Naive thymus-derived CD4-positive, alpha-beta T cell (primary cell): ENCODE measurements at regions of chr19 and their contacts with region 1.

Region 1: GRCh38 chr19:37077934-37078725 is at the start of gene ZNF420:
- DNase-seq: peak; percentile 64 to 89 (median 84)
- ATAC-seq: peak; percentile 98
- H3K4me3 ChIP-seq: peak within 1 kb of the TSS; percentile 92
- H3K4me3 Mint-ChIP-seq: peak within 1 kb of the TSS; percentile 90 to 100 (median 96)
- H3K27ac ChIP-seq: peak within 1 kb of the TSS; percentile 82
- H3K27ac Mint-ChIP-seq: peak within 1 kb of the TSS; percentile 70 to 99 (median 94)
- H3K4me1 ChIP-seq: peaks cover 11 to 19% of the 10 kb centered on the region in 2 donors
- H3K4me1 Mint-ChIP-seq: peaks cover 16 to 43% (median 34%) of the 10 kb centered on the region in 7 donors
- H3K27me3 ChIP-seq: no peaks in the 10 kb centered on the region
- H3K27me3 Mint-ChIP-seq: no peaks in the 10 kb centered on the region
- total RNA-seq, gene ZNF420: 10.8 to 34.9 (median 15.9) TPM

Region 2: GRCh38 chr19:36378625-36379509 is 699.3 kb before region 1 on chr19 and contains the start of gene ZFP14:
- CTCF ChIA-PET with region 1: no interaction called
- POLR2A ChIA-PET with region 1: no interaction called
- intact Hi-C with region 1: loop called (anchors 1 kb)
- DNase-seq: peak; percentile 86 to 95 (median 93)
- ATAC-seq: peak; percentile 99
- H3K4me3 ChIP-seq: peak within 1 kb of the TSS; percentile 86
- H3K4me3 Mint-ChIP-seq: peak within 1 kb of the TSS; percentile 82 to 98 (median 94)
- H3K27ac ChIP-seq: peak within 1 kb of the TSS; percentile 86
- H3K27ac Mint-ChIP-seq: peak within 1 kb of the TSS; percentile 55 to 98 (median 94)
- H3K4me1 ChIP-seq: peaks cover 0 to 10% of the 10 kb centered on the region in 2 donors
- H3K4me1 Mint-ChIP-seq: peaks cover 9 to 23% (median 21%) of the 10 kb centered on the region in 7 donors
- H3K27me3 ChIP-seq: no peaks in the 10 kb centered on the region
- H3K27me3 Mint-ChIP-seq: no peaks in the 10 kb centered on the region
- total RNA-seq, gene ZFP14: 5.3 to 24.0 (median 9.2) TPM

Region 3: DNA sequence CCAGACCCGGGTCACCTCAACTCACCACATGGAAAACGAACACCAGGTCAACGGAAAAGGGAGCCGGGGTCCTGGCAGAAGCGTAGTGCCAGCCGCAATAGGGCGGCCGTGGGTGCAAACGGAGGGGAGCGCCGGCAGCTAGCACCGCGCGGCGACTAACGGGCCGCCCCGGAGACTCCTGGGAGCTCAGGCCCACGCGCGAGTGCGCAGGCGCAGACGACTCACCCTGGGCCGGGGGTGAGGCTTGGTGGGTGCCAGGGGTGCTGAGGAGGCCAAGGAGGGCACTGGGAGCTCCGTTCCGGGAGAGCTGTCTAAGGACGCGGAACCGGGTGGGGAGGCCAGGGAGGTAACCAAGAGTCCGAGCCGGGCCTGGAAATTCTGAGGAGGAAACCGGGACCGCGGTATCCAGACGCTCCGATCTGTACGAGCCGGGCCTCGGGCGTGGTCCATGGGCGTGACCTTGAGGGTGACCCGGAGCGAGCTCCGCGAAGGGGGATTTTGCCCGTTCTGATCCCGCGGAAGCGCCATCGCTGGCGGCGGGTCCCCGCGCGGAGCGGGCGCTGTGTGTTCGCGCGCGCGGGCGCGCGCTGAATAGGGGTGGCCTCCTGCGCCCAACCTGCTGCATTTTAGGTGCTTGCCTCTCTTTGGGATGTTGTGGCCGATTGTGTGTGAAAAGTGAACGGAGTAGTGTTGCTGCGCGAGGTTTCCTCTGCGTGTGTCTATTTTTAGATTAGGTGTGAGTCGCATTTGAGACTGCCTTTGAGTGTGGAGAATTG is 472.8 kb before region 1 on chr19 and contains the start of gene ZNF382:
- CTCF ChIA-PET with region 1: no interaction called
- POLR2A ChIA-PET with region 1: no interaction called
- intact Hi-C with region 1: loop called in 1 of 2 experiments (anchors 1 kb)
- DNase-seq: peak; percentile 77 to 92 (median 86)
- ATAC-seq: peak; percentile 80
- H3K4me3 ChIP-seq: peak within 1 kb of the TSS; percentile 95
- H3K4me3 Mint-ChIP-seq: peak within 1 kb of the TSS; percentile 81 to 99 (median 93)
- H3K27ac ChIP-seq: peak within 1 kb of the TSS; percentile 84
- H3K27ac Mint-ChIP-seq: peak within 1 kb of the TSS; percentile 78 to 98 (median 93)
- H3K4me1 ChIP-seq: peaks cover 7 to 15% of the 10 kb centered on the region in 2 donors
- H3K4me1 Mint-ChIP-seq: peaks cover 20 to 32% (median 27%) of the 10 kb centered on the region in 7 donors
- H3K27me3 ChIP-seq: no peaks in the 10 kb centered on the region
- H3K27me3 Mint-ChIP-seq: no peaks in the 10 kb centered on the region
- total RNA-seq, gene ZNF382: 5.4 to 20.2 (median 12.2) TPM

Region 4: DNA sequence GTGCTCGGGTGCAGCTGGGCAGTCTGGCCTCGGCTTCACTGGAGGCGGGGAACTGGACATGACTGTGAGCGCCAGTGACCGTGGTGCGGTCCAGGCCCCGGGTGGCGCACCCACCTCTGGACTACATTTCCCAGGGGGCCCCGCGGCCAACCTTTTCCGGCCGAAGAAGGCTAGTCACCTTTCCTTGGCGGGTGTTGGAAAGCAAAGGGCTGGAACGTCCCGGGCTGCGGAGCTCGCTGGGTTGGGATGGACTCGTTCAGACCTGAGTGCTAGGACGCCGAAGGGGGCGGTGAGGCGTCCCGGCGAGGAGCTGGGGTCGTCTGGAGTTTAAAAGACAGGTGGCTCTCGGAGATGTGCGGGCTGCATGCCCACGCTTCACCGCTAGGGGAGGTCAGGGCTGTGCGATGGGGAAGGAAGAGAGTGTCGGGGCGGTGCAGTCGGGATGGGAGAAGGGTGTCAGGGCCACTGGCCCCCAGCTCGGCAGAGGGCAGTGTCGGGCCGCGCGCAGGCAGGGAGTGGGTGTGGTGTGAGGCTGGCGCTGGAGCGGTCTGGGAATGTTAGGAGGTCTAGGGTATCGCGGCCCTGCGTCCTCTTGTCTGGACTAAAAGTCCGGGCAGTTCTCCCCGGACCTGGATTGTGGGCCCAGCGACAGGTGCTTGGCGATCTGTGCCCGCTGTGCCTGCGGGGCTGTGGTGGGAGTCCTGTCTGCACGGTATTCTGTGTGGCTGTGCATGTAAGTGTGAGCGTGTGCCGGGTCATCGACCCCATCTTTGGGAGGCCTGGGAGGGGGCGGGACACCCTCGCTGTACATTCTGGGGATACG is 104.9 kb before region 1 on chr19:
- CTCF ChIA-PET with region 1: no interaction called
- POLR2A ChIA-PET with region 1: interaction called, 3 read pairs
- intact Hi-C with region 1: loop called (anchors 1 kb)
- DNase-seq: peak; percentile 56 to 84 (median 73)
- ATAC-seq: peak; percentile 96
- H3K4me3 ChIP-seq: peak overlapping the region; percentile 100
- H3K4me3 Mint-ChIP-seq: peak overlapping the region; percentile 92 to 99 (median 97)
- H3K27ac ChIP-seq: peak overlapping the region; percentile 75
- H3K27ac Mint-ChIP-seq: peak overlapping the region; percentile 83 to 97 (median 92)
- H3K4me1 ChIP-seq: peaks cover 5 to 15% of the 10 kb centered on the region in 2 donors
- H3K4me1 Mint-ChIP-seq: peaks cover 9 to 22% (median 13%) of the 10 kb centered on the region in 7 donors
- H3K27me3 ChIP-seq: no peaks in the 10 kb centered on the region
- H3K27me3 Mint-ChIP-seq: no peaks in the 10 kb centered on the region

Region 5: DNA sequence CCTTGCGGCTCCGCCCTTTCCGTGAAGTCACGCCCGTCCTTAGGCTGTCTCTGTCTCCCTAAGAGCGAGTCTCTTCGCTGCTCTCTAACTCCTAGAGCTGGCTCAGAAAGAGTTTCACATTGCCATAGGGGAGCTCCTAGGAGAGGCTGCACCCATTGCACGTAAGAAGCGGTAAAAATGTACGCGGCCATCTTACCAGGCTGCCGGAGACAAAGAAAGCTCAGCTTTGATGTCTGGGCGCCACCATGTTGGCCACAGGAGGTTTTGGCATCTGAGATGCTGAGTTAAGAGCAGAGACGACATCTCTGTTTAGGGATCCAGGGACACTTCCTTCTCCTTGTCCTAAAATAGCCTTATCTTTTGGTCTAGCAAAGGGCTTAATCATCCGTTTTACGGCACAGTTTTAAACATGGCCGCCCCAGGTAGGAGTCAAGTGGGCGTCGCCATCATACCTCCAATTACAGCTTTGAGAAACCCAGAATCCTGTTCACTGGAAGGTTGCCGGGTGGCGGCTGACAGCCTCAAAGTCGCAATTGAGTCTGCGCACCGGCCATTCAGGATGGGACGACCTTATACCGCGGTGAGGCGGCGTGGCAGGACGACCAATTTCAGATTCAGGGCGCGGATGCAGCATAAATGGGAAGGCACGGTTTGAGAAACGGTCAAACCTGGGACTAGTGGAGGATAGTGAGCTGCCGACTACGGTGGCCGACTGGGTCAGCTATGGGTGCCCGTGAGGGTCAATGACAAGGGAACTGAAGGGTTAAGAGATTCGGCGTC is 428.4 kb after region 1 on chr19 and contains the start of gene ZNF793:
- CTCF ChIA-PET with region 1: no interaction called
- POLR2A ChIA-PET with region 1: interaction called, 4 read pairs
- intact Hi-C with region 1: loop called in 1 of 2 experiments (anchors 2 kb)
- DNase-seq: peak; percentile 33 to 88 (median 83)
- ATAC-seq: peak; percentile 90
- H3K4me3 ChIP-seq: peak within 1 kb of the TSS; percentile 83
- H3K4me3 Mint-ChIP-seq: no peak within 1 kb of the TSS
- H3K27ac ChIP-seq: peak within 1 kb of the TSS; percentile 90
- H3K27ac Mint-ChIP-seq: no peak within 1 kb of the TSS
- H3K4me1 ChIP-seq: peaks cover 0 to 14% of the 10 kb centered on the region in 2 donors
- H3K4me1 Mint-ChIP-seq: peaks cover 0 to 2% (median 0%) of the 10 kb centered on the region in 7 donors
- H3K27me3 ChIP-seq: no peaks in the 10 kb centered on the region
- H3K27me3 Mint-ChIP-seq: peaks cover 0 to 5% (median 0%) of the 10 kb centered on the region in 5 donors
- total RNA-seq, gene ZNF793: 1.1 to 11.7 (median 6.0) TPM

Region 6: DNA sequence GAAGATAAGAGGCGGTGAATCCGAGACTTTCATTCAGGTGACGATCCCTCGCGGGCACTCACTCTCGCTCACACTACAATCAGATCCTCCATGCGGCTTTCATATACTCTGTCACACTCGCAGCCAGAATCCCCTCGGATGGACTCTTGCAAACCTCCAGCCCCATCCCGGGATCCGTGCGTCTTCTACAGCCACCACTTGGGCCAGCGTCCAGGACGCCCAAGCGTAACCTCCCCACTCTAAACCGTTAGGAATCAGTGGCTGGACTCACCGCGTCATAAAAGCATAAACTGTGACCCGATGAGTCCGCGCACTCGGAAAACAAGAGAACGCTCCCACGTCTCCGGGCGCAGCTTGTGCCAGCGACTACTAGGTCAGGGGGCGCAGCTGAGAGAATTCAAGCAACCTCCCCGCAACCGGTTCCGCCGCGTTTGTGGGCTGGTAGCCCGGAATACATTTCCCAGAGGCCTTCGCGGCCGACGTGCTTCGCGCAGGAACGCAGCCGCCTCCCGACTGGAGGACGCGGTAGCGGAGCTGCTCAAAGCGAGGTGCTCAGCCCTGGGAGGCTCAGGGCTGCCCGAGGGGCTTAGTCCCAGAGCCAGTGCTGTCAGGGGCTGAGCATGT is 613.9 kb after region 1 on chr19:
- CTCF ChIA-PET with region 1: no interaction called
- POLR2A ChIA-PET with region 1: no interaction called
- intact Hi-C with region 1: loop called in 1 of 2 experiments (anchors 1 kb)
- DNase-seq: peak; percentile 52 to 83 (median 73)
- ATAC-seq: peak; percentile 97
- H3K4me3 ChIP-seq: peak overlapping the region; percentile 95
- H3K4me3 Mint-ChIP-seq: peak overlapping the region; percentile 83 to 98 (median 96)
- H3K27ac ChIP-seq: peak overlapping the region; percentile 82
- H3K27ac Mint-ChIP-seq: peak overlapping the region; percentile 69 to 98 (median 96)
- H3K4me1 ChIP-seq: peaks cover 0 to 4% of the 10 kb centered on the region in 2 donors
- H3K4me1 Mint-ChIP-seq: peaks cover 5 to 17% (median 11%) of the 10 kb centered on the region in 7 donors
- H3K27me3 ChIP-seq: no peaks in the 10 kb centered on the region
- H3K27me3 Mint-ChIP-seq: no peaks in the 10 kb centered on the region